Activated naive CD4-positive, alpha-beta T cell treated with anti-CD3 and anti-CD28 coated beads, Interleukin-2, amount 10 ng/mL, durations not matched to agents 7 days and 5 days (primary cell): ENCODE measurements at regions of chr1 and their contacts with region 1.

Region 1: DNA sequence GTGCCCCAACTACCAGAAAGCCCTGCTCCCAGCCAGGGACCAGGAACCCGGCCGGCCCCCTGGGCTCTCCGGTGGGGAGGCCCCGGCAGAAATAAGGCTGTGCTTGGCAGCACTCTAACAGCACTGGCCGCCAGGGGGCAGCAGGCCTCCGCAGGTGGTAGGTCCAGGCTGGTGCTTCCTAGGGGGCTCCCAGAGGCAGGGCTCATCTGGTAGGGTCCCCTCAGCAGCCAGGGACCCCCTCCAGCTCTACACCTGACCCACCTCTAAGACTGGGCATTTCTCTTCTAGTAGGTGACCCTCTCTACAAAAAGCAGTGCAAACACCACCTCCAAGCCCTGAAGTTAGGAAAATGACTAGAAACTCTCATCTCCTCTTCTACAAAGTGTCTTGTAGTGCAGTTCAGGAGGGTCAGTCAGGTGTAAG is 85.6 kb downstream of the STUM start:
- DNase-seq: peak; percentile 86
- H3K4me3 Mint-ChIP-seq: peak overlapping the region; percentile 35
- H3K27ac Mint-ChIP-seq: peak overlapping the region; percentile 83
- H3K4me1 Mint-ChIP-seq: peaks cover 52% of the 10 kb centered on the region
- H3K27me3 Mint-ChIP-seq: peaks cover 4% of the 10 kb centered on the region

Region 2: DNA sequence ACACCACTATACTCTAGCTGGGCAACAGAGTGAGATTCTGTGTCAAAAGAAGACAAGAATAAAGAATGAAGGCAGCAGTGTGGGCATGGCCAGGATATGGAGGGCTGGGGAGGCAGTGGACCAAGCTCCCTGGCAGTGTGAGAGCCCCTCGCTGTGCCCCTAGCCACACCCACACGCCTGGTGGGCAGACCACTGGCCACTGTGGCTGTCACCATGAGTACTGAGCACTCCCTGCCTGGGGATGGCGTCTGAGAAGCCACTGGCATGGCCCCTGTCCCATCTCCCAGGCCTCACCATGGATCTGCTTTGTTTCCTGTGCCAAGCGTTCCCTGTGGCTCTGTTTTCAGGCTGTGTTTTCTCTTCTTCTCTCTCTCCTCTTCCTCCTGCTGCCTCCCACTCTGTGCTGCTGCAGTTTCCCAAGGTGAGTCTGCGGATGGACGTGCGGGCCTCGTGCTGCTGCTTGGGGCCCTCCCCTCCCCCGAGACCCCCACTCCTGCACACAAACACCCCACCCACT is 33.9 kb before region 1 on chr1:
- CTCF ChIA-PET with region 1: no interaction called
- DNase-seq: no peak
- H3K4me3 Mint-ChIP-seq: no peak overlapping the region
- H3K27ac Mint-ChIP-seq: no peak overlapping the region
- H3K4me1 Mint-ChIP-seq: no peaks in the 10 kb centered on the region
- H3K27me3 Mint-ChIP-seq: peaks cover 30% of the 10 kb centered on the region

Region 3: GRCh38 chr1:226649780-226650179 is 15.6 kb after region 1 on chr1:
- CTCF ChIA-PET with region 1: interaction called, 26 read pairs
- DNase-seq: peak; percentile 64
- H3K4me3 Mint-ChIP-seq: no peak overlapping the region
- H3K27ac Mint-ChIP-seq: peak overlapping the region; percentile 46
- H3K4me1 Mint-ChIP-seq: peaks cover 40% of the 10 kb centered on the region
- H3K27me3 Mint-ChIP-seq: no peaks in the 10 kb centered on the region

Region 4: DNA sequence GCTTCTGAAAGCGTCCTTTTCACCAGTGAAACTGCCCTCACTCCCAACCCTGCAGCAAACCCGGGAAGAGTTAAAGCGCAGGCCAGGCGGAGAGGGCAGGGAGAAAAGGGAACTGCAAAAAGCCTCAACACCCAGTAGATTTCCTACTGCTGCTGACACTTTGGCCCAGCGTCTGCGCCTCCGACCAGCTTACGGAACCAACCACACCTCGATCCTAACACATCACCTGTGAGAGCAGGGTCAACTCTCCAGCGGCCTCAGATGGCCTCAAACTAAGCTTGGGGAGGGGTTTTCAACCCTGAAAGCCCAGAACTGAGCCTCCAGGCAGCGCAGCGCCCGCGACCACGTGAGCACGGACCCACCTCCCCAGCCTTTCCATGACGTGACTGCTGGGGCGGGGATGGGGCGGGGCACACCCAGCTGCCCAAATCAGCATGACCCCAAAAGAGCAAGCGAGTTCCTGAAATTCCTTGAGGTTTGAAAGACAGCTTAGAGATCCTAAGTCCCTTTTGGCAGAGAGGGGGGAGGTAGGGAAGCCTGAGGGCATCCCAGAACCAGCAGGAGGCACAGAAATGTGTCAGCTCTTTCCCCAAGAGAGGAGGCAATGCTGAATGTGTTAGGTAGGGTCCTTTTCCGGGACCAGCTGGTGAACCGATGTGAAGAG is 45.8 kb after region 1 on chr1:
- CTCF ChIA-PET with region 1: interaction called, 11 read pairs
- DNase-seq: peak; percentile 86
- H3K4me3 Mint-ChIP-seq: peak overlapping the region; percentile 69
- H3K27ac Mint-ChIP-seq: peak overlapping the region; percentile 93
- H3K4me1 Mint-ChIP-seq: peaks cover 98% of the 10 kb centered on the region
- H3K27me3 Mint-ChIP-seq: no peaks in the 10 kb centered on the region

Region 5: DNA sequence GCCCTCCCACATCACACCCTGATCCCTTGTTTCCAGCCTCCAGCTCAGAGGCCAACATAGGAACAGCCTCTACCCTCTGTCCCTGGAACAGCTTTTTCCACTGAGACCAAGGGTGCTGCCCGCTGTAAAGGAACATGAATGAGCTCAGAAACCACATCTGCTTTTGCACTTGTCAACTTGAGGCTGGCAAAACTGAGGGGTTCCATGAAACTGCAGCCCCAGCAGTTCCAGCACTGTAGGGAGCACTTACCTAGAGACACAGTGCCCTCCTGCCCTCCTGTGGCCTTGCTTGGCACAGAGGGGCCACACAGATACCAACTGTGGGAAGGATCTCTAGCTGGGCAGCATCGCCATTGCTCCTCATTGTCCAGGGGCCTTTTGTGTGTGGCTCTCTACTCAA is 53.2 kb after region 1 on chr1:
- CTCF ChIA-PET with region 1: interaction called, 35 read pairs
- DNase-seq: peak; percentile 47
- H3K4me3 Mint-ChIP-seq: no peak overlapping the region
- H3K27ac Mint-ChIP-seq: no peak overlapping the region
- H3K4me1 Mint-ChIP-seq: peaks cover 98% of the 10 kb centered on the region
- H3K27me3 Mint-ChIP-seq: no peaks in the 10 kb centered on the region

Region 6: GRCh38 chr1:226749467-226749866 is 115.3 kb after region 1 on chr1:
- CTCF ChIA-PET with region 1: no interaction called
- DNase-seq: no peak
- H3K4me3 Mint-ChIP-seq: no peak overlapping the region
- H3K27ac Mint-ChIP-seq: no peak overlapping the region
- H3K4me1 Mint-ChIP-seq: peaks cover 7% of the 10 kb centered on the region
- H3K27me3 Mint-ChIP-seq: peaks cover 9% of the 10 kb centered on the region

Region 7: DNA sequence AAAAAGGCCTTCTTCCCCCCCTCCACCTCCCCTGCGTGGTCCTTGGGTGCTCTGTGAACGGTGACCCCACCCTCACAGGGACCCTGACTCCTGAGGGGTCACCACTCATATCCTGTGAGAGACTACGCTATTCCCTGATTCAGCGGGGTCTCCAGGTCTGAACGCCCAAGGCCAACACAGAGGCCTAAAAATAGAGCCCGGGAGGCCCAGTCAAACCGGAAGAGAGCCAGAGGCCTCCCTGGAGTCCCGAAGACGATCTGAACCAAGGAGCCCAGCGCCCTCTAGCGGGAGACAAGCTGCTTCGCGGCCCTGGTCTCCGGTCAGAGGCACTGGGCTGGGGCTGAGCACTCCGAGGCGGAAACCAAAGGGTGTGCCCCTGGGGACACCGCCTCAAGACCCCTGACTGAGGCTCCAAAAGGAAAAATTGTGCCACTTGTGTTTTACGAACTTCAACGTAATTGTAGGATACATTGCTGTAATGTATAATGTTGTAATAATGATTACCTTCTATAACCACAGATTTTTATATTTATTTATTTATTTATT is 193.9 kb after region 1 on chr1:
- CTCF ChIA-PET with region 1: interaction called, 75 read pairs
- DNase-seq: peak; percentile 97
- H3K4me3 Mint-ChIP-seq: no peak overlapping the region
- H3K27ac Mint-ChIP-seq: peak overlapping the region; percentile 88
- H3K4me1 Mint-ChIP-seq: peaks cover 17% of the 10 kb centered on the region
- H3K27me3 Mint-ChIP-seq: peaks cover 16% of the 10 kb centered on the region